ENCODE measurements at regions of chr10 and their contacts with region 1.

Region 1: GRCh38 chr10:15088428-15089261 is at the start of gene ACBD7:
- DNase-seq: peak; percentile 60
- ATAC-seq: peak; percentile 91
- H3K4me3 ChIP-seq: peak within 1 kb of the TSS; percentile 64 to 85 (median 81)
- H3K27ac ChIP-seq: no peak within 1 kb of the TSS
- H3K4me1 ChIP-seq: peaks cover 15% of the 10 kb centered on the region
- H3K27me3 ChIP-seq: no peaks in the 10 kb centered on the region; a peak in 1 of 5 replicates
- CTCF ChIP-seq: peak; percentile 30
- EP300 ChIP-seq: no peak
- POLR2A ChIP-seq: peak; percentile 30 to 67; a peak in 2 of 4 replicates
- RAD21 ChIP-seq: no peak
- total RNA-seq, gene ACBD7: 2.6 and 4.0 TPM in 2 replicates

Region 2: GRCh38 chr10:14954001-14954770 is 134.5 kb before region 1 on chr10 and contains the start of gene DCLRE1C:
- CTCF ChIA-PET with region 1: no interaction called
- POLR2A ChIA-PET with region 1: interaction called, 3 read pairs
- in situ Hi-C with region 1: no loop called
- intact Hi-C with region 1: loop called (anchors 5 kb)
- DNase-seq: peak; percentile 88
- ATAC-seq: peak; percentile 95
- H3K4me3 ChIP-seq: peak within 1 kb of the TSS; percentile 57 to 82 (median 67)
- H3K27ac ChIP-seq: peak within 1 kb of the TSS; percentile 85
- H3K4me1 ChIP-seq: peaks cover 47% of the 10 kb centered on the region
- H3K27me3 ChIP-seq: no peaks in the 10 kb centered on the region; a peak in 1 of 5 replicates
- CTCF ChIP-seq: no peak; the same call in 1 of the 2 replicates
- EP300 ChIP-seq: no peak; a peak in 1 of 4 replicates
- POLR2A ChIP-seq: peak; percentile 78 to 84
- RAD21 ChIP-seq: peak; percentile 30; the same call in 1 of the 2 replicates
- total RNA-seq, gene DCLRE1C: 10.3 and 11.5 TPM in 2 replicates

Region 3: GRCh38 chr10:14995964-14996565 is 92.6 kb before region 1 on chr10:
- CTCF ChIA-PET with region 1: no interaction called
- POLR2A ChIA-PET with region 1: no interaction called
- in situ Hi-C with region 1: no loop called
- intact Hi-C with region 1: loop called (anchors 5 kb)
- DNase-seq: no peak
- ATAC-seq: no peak
- H3K4me3 ChIP-seq: no peak overlapping the region
- H3K27ac ChIP-seq: no peak overlapping the region
- H3K4me1 ChIP-seq: peaks cover 28% of the 10 kb centered on the region
- H3K27me3 ChIP-seq: no peaks in the 10 kb centered on the region; a peak in 1 of 5 replicates
- CTCF ChIP-seq: no peak
- EP300 ChIP-seq: no peak
- POLR2A ChIP-seq: no peak
- RAD21 ChIP-seq: no peak